ENCODE measurements at regions of chr17 and their contacts with region 1.

Region 1: GRCh38 chr17:78925234-78925633 is at the start of gene TIMP2:
- DNase-seq: peak; percentile 88 to 91
- H3K4me3 ChIP-seq: peak within 1 kb of the TSS; percentile 80
- H3K4me3 Mint-ChIP-seq: peak within 1 kb of the TSS; percentile 90
- H3K27ac Mint-ChIP-seq: peak within 1 kb of the TSS; percentile 39
- H3K4me1 ChIP-seq: peaks cover 23% of the 10 kb centered on the region
- H3K4me1 Mint-ChIP-seq: peaks cover 23% of the 10 kb centered on the region
- H3K27me3 ChIP-seq: no peaks in the 10 kb centered on the region
- H3K27me3 Mint-ChIP-seq: peaks cover 3% of the 10 kb centered on the region
- CTCF ChIP-seq: peak; percentile 35 to 62
- total RNA-seq, gene TIMP2: 63.8 and 70.1 TPM in 2 replicates

Region 2: DNA sequence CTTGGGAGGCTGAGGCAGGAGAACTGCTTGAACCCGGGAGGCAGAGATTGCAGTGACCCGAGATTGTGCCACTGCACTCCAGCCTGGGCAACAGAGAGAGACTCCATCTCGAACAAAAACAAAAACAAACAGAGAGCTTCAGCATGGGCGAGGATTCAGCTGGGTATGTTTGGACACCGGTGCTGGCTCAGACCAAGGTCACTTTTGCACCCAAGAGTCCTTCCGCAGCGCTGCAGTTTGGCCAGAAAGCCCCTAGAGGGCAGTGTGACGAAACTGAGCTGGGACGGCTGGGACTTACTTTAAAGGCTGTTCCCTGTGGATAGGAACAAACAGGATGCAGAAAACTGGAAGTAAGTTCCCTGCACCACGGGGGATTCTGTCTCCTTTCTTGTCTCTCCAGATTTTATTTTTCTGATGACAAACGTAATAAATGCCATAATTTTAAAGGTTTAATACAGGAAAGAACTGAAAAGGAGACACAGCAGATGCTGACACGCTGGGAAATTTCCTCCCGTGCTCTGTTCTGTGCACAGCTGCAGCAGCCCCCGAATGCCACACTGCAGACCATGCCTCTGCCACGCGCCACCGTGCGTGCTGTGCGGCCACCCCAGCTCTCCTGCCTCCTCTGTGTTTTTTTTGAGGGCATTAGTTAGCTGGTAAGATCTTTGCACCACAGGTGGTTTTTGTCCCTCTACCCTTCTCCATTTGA is 59.4 kb before region 1 on chr17:
- CTCF ChIA-PET with region 1: interaction called, 9 read pairs
- POLR2A ChIA-PET with region 1: no interaction called
- intact Hi-C with region 1: loop called (anchors 5 kb)
- DNase-seq: peak; percentile 81 to 87
- H3K4me3 ChIP-seq: no peak overlapping the region
- H3K4me3 Mint-ChIP-seq: no peak overlapping the region
- H3K27ac Mint-ChIP-seq: no peak overlapping the region
- H3K4me1 ChIP-seq: no peaks in the 10 kb centered on the region
- H3K4me1 Mint-ChIP-seq: no peaks in the 10 kb centered on the region
- H3K27me3 ChIP-seq: no peaks in the 10 kb centered on the region
- H3K27me3 Mint-ChIP-seq: no peaks in the 10 kb centered on the region
- CTCF ChIP-seq: peak; percentile 96 to 97

Region 3: DNA sequence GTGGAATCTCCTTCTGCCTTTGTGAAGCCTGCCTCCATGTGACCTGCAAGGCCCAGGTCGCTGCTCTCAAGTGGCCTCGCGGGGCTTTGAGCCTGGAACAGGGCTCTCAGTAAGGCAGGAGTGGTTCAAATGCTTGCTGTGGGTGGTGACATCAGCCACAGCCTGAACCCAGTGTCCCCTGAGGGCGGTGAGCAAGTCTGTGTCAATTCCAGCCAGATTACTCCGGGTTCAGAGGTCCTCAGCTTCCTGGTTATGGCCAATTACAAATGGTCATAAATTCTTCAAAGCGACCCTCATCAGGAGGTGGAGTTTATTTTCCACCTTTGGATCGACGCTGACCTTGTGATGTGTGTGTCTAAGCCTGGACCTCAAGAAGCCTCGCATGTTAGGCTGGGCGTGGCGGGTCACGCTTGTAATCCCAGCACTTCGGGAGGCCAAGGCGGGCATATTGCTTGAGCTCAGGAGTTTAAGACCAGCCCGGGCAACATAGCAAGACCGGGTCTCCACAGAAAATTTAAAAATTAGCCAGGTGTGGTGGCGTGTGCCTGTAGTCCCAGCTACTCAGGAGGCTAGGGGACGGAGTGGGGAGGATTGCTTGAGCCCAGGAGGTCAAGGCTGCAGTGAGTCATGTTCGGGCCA is 37.2 kb after region 1 on chr17:
- CTCF ChIA-PET with region 1: interaction called, 3 read pairs
- POLR2A ChIA-PET with region 1: no interaction called
- intact Hi-C with region 1: loop called (anchors 5 kb)
- DNase-seq: peak; percentile 86 to 94
- H3K4me3 ChIP-seq: no peak overlapping the region
- H3K4me3 Mint-ChIP-seq: no peak overlapping the region
- H3K27ac Mint-ChIP-seq: peak overlapping the region; percentile 86
- H3K4me1 ChIP-seq: peaks cover 35% of the 10 kb centered on the region
- H3K4me1 Mint-ChIP-seq: peaks cover 19% of the 10 kb centered on the region
- H3K27me3 ChIP-seq: no peaks in the 10 kb centered on the region
- H3K27me3 Mint-ChIP-seq: no peaks in the 10 kb centered on the region
- CTCF ChIP-seq: no peak